Activated B cell treated with CpG ODN at 0.5 μM for 24 hours (primary cell): ENCODE measurements at regions of chr2 and their contacts with region 1.

Region 1: GRCh38 chr2:101151141-101151858 is at the start of gene TBC1D8:
- DNase-seq: peak; percentile 59
- ATAC-seq: peak; percentile 86
- H3K4me3 Mint-ChIP-seq: peak within 1 kb of the TSS; percentile 86
- H3K27ac Mint-ChIP-seq: no peak within 1 kb of the TSS
- H3K4me1 Mint-ChIP-seq: peaks cover 32% of the 10 kb centered on the region
- H3K27me3 Mint-ChIP-seq: peaks cover 31% of the 10 kb centered on the region
- CTCF ChIP-seq: no peak
- total RNA-seq, gene TBC1D8: 3.5 and 4.7 TPM in 2 replicates

Region 2: GRCh38 chr2:100580367-100581276 is 570.7 kb before region 1 on chr2:
- CTCF ChIA-PET with region 1: no interaction called
- POLR2A ChIA-PET with region 1: no interaction called
- intact Hi-C with region 1: loop called (anchors 2 kb)
- DNase-seq: peak; percentile 50
- ATAC-seq: peak; percentile 79
- H3K4me3 Mint-ChIP-seq: peak overlapping the region; percentile 56
- H3K27ac Mint-ChIP-seq: peak overlapping the region; percentile 99
- H3K4me1 Mint-ChIP-seq: peaks cover 22% of the 10 kb centered on the region
- H3K27me3 Mint-ChIP-seq: no peaks in the 10 kb centered on the region
- CTCF ChIP-seq: no peak

Region 3: DNA sequence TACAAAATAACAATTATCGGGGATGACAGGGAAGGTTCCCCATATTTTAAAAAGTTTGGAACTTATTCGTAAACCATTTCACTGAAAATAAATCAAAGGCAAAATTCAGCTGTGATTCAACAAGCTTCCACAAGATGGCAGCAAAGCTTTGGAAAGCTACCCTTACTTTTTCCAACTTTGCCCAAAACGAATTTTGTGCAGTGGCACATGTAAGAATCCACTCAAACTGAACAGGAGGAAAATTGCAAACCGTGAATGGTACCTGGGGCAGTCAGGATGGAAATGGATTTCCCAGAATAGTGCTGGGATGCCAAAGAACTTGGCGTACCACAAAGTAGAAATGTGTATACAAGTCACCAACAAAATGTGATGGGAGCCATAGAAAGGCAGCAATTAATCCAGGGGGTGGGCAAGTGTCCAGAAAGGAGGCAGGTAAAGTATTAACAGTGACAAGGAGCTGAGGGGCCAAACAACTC is 138.6 kb before region 1 on chr2:
- CTCF ChIA-PET with region 1: interaction called, 11 read pairs
- POLR2A ChIA-PET with region 1: interaction called, 7 read pairs
- intact Hi-C with region 1: loop called (anchors 1 kb)
- DNase-seq: no peak
- ATAC-seq: no peak
- H3K4me3 Mint-ChIP-seq: no peak overlapping the region
- H3K27ac Mint-ChIP-seq: no peak overlapping the region
- H3K4me1 Mint-ChIP-seq: peaks cover 20% of the 10 kb centered on the region
- H3K27me3 Mint-ChIP-seq: no peaks in the 10 kb centered on the region
- CTCF ChIP-seq: peak; percentile 93

Region 4: DNA sequence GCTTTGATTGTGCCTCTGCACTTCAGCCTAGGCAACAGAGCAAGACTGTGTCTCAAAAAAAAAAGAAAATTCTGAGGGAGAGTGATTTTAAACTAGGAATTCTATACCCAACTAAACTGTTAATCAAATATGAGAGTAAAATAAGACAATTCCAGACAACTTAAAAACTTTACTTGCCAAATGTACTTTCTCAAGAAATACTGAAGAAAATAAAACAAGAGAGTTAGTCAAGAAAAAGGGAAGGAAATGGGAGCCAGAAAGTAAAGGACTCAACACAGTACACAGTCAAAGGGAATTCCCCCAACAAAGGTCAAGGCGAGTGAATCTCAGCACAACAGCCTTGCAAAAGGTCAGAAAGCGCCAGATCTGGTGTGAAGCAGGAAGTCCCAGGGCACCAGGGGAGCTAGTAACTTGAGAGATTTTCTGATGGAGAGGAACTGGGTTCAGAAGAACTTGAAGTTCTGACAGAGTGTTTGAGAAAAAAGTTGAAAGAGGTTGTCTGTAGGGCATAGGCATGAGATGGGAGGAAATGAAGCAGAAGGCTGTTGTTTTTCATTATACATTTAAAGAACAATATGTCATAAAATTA is 22.5 kb after region 1 on chr2:
- CTCF ChIA-PET with region 1: interaction called, 10 read pairs
- POLR2A ChIA-PET with region 1: interaction called, 14 read pairs
- intact Hi-C with region 1: loop called (anchors 1 kb)
- DNase-seq: peak; percentile 39
- ATAC-seq: peak; percentile 100
- H3K4me3 Mint-ChIP-seq: peak overlapping the region; percentile 29
- H3K27ac Mint-ChIP-seq: peak overlapping the region; percentile 87
- H3K4me1 Mint-ChIP-seq: peaks cover 35% of the 10 kb centered on the region
- H3K27me3 Mint-ChIP-seq: peaks cover 2% of the 10 kb centered on the region
- CTCF ChIP-seq: no peak

Region 5: DNA sequence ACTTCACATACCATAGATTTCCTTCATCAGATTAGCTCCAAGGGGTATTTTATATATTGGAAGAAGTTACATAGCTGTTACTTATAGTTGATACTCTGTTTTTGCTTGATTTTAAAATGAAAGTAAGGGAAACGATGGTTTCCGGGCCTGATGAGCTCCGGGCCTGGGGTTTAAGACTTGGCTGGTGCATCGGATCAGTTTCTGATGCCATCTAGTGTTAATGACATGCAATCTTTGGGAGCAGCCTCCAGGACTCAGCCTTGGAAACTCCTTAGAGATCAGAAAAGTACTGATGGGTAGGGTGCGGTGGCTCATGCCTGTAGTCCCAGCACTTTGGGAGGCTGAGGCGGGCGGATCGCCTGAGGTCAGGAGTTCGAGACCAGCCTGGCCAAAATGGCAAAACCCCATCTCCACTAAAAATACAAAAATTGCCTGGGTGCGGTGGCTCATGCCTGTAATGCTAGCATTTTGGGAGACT is 54.3 kb after region 1 on chr2:
- CTCF ChIA-PET with region 1: interaction called, 32 read pairs
- POLR2A ChIA-PET with region 1: interaction called, 6 read pairs
- intact Hi-C with region 1: loop called (anchors 2 kb)
- DNase-seq: no peak
- ATAC-seq: peak; percentile 91
- H3K4me3 Mint-ChIP-seq: peak overlapping the region; percentile 72
- H3K27ac Mint-ChIP-seq: no peak overlapping the region
- H3K4me1 Mint-ChIP-seq: no peaks in the 10 kb centered on the region
- H3K27me3 Mint-ChIP-seq: peaks cover 1% of the 10 kb centered on the region
- CTCF ChIP-seq: peak; percentile 16